ENCODE measurements at regions of chr12 and their contacts with region 1.

Region 1: DNA sequence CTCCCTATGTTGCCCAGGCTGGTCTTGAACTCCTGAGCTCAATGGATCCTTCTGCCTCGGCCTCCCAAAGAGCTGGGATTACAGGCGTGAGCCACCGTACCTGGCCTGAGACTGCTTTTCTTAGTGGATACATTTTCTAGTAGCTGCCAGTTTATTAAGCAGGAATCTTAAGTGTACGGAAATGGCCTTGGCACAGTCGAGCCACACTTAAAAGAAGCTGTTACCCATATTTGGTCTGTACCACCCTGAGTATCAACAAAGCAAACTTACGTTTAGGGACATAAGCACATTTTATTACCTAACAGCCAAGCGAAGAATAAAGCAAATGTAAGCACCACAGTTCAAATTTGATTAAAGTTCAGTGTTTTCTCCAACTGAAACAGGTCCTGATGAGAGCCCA is 50.7 kb upstream of the NR2C1 start:
- DNase-seq: peak; percentile 61
- ATAC-seq: peak; percentile 91 to 96
- H3K4me3 ChIP-seq: no peak overlapping the region
- H3K27ac ChIP-seq: no peak overlapping the region
- H3K4me1 ChIP-seq: peaks cover 7% of the 10 kb centered on the region
- H3K27me3 ChIP-seq: no peaks in the 10 kb centered on the region
- CTCF ChIP-seq: no peak

Region 2: DNA sequence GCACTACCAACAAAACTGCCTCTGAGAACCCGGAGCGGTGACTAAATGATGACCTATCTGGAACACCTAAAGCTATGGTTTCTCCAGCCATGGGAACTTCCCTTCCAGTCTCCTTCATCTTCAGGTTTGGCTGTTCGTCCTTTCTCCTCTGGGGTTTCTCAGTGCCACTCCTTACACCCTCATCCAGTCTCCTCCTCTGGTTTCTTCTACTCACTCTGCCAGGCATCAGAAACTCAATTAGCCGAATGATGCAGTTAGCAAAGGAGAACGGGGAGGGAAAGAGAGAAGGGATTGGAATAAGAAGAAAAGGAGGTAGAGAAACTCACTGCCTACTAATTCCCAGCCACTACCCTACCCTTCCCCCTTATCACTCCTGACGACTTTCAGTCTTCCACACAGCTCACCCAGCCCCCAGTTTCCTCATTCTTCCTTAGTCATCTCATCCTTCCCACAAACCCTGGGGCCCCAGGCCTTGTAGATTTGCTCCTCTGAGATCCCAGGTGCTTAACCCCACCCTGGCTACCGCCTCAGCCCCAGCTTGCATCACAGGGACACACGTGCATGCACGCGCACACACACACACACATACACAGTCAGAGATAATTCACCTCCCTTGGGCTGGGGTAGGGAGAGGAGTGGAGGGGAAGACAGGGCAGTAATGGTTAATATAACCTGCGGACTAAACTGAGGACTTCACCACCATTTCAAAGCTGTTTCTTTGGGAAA is 80.2 kb after region 1 on chr12:
- intact Hi-C with region 1: no loop called
- DNase-seq: peak; percentile 57
- ATAC-seq: peak; percentile 78 to 80
- H3K4me3 ChIP-seq: no peak overlapping the region
- H3K27ac ChIP-seq: peak overlapping the region; percentile 69
- H3K4me1 ChIP-seq: peaks cover 64% of the 10 kb centered on the region
- H3K27me3 ChIP-seq: no peaks in the 10 kb centered on the region
- CTCF ChIP-seq: no peak

Region 3: DNA sequence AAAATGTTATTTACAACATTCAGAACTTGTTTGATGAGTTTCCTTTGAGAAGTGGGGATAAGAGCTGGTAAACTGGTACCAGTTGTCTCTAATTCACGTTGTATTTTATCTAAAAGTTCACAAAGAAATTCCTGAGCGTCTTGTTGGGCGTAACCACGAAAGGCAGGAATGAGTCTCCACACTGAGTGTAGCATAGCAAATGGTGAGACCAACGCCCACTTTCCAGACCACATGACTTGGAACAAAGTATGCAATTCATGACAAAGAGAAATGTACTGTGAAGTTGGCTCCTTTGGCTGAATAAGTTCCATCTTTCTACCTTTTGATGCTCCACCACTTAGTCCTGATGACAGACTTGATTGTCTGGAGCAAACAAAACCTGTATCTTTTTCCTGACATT is 408.7 kb after region 1 on chr12:
- intact Hi-C with region 1: loop called (anchors 10 kb)
- DNase-seq: no peak
- ATAC-seq: peak; percentile 58 to 70
- H3K4me3 ChIP-seq: no peak overlapping the region
- H3K27ac ChIP-seq: no peak overlapping the region
- H3K4me1 ChIP-seq: peaks cover 8% of the 10 kb centered on the region
- H3K27me3 ChIP-seq: no peaks in the 10 kb centered on the region
- CTCF ChIP-seq: no peak

Region 4: DNA sequence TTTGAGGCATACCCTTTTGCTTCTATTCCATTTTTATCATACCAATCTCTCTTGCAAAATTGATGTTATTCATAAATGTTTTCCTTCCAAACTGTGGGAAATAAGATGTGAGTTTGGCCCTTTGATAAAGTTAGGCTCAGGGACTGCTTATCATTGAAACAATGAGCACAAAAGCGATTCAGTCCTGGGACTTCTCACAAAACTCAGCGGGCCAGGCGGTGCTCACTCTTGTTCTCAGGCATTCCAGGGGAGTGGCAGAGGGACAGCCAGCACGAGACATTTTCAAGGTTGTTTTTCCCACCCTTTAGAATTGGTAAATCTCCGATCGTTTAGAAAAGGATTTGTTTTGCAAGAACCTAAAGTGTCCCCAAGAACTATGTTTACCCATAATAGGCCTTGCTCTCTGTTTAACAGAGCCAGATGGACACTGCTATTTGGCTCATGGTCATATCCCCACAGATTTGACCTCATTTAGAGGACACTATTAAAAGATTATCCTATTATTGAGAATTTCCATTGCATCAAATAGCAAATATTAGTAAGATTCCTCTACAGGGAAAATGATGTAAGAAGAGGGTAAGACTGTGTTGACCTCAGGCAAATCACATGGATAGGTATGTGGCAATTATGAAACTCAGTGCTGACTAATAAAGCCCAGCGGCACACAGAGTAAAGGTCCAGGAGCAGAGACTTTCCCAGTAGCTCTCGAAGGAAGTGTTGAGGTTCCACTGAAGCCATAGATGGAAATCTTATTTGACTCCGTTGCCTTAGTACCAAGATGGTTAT is 529.8 kb after region 1 on chr12:
- intact Hi-C with region 1: no loop called
- DNase-seq: no peak
- ATAC-seq: peak; percentile 70 to 75
- H3K4me3 ChIP-seq: no peak overlapping the region
- H3K27ac ChIP-seq: no peak overlapping the region
- H3K4me1 ChIP-seq: no peaks in the 10 kb centered on the region
- H3K27me3 ChIP-seq: no peaks in the 10 kb centered on the region
- CTCF ChIP-seq: no peak